Colonic mucosa (tissue), 4 donors: ENCODE measurements at regions of chr17 and their contacts with region 1.

Region 1: GRCh38 chr17:70137451-70138230 is 31.7 kb upstream of the KCNJ2 start:
- DNase-seq: peak; percentile 73
- H3K4me3 ChIP-seq: peak overlapping the region; percentile 11
- H3K27ac ChIP-seq: peak overlapping the region; percentile 67
- H3K4me1 ChIP-seq: peaks cover 9% of the 10 kb centered on the region
- H3K27me3 ChIP-seq: no peaks in the 10 kb centered on the region
- CTCF ChIP-seq: no peak

Region 2: GRCh38 chr17:70034158-70034557 is 103.5 kb before region 1 on chr17:
- intact Hi-C with region 1: loop called (anchors 10 kb)
- DNase-seq: no peak
- H3K4me3 ChIP-seq: no peak overlapping the region
- H3K27ac ChIP-seq: no peak overlapping the region
- H3K4me1 ChIP-seq: no peaks in the 10 kb centered on the region
- H3K27me3 ChIP-seq: no peaks in the 10 kb centered on the region
- CTCF ChIP-seq: no peak

Region 3: GRCh38 chr17:70158180-70158579 is 20.5 kb after region 1 on chr17:
- intact Hi-C with region 1: no loop called
- DNase-seq: no peak
- H3K4me3 ChIP-seq: no peak overlapping the region
- H3K27ac ChIP-seq: no peak overlapping the region
- H3K4me1 ChIP-seq: no peaks in the 10 kb centered on the region
- H3K27me3 ChIP-seq: no peaks in the 10 kb centered on the region
- CTCF ChIP-seq: no peak